Activated CD4-positive, alpha-beta T cell treated with anti-CD3 and anti-CD28 coated beads for 36 hours (primary cell): ENCODE measurements at regions of chr14 and their contacts with region 1.

Region 1: DNA sequence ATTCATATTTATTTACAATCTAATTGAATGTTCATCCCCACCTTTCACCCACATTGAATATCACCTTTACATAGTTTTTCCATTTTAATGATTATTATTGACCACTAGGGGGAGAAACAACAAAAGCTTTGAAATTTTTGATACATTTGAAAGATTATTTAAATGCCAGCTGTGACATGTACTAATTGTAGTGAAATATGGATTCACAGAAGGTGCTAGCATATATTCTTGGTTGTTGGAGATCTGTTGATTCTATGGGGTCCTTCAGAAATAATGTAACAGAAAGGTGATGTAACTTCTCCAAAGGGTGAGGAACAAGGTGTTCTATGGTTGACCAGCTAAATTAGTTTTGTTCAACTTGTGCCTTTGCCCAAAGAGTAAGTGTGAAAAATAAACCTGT is 22.4 kb upstream of the GPR33 start:
- DNase-seq: no peak
- ATAC-seq: no peak
- H3K4me3 Mint-ChIP-seq: no peak overlapping the region
- H3K27ac Mint-ChIP-seq: no peak overlapping the region
- H3K4me1 Mint-ChIP-seq: no peaks in the 10 kb centered on the region
- H3K27me3 Mint-ChIP-seq: no peaks in the 10 kb centered on the region

Region 2: DNA sequence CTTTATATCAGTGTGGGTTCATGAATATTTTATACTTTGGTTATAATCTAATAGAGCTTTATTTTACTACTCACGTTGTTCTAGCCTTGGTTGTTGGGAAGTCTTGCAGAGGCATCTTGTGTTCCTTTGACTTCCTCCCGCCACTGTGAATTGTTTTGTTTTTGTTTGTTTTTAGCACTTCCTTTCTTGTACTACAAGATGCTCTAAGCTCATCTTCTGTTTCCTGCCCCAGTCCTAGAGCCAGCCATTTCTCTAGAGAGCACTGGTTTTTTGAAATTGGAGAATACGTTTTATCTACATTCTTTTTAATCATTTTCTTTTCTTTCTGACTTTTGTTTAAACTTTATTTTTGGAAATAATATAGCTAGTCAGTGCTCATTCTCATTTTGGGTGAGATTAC is 35.1 kb after region 1 on chr14:
- CTCF ChIA-PET with region 1: no interaction called
- POLR2A ChIA-PET with region 1: no interaction called
- intact Hi-C with region 1: no loop called
- DNase-seq: no peak
- ATAC-seq: no peak
- H3K4me3 Mint-ChIP-seq: no peak overlapping the region
- H3K27ac Mint-ChIP-seq: no peak overlapping the region
- H3K4me1 Mint-ChIP-seq: no peaks in the 10 kb centered on the region
- H3K27me3 Mint-ChIP-seq: peaks cover 24% of the 10 kb centered on the region

Region 3: GRCh38 chr14:31770271-31770670 is 260.0 kb after region 1 on chr14:
- CTCF ChIA-PET with region 1: no interaction called
- POLR2A ChIA-PET with region 1: no interaction called
- intact Hi-C with region 1: no loop called
- DNase-seq: no peak
- ATAC-seq: no peak
- H3K4me3 Mint-ChIP-seq: no peak overlapping the region
- H3K27ac Mint-ChIP-seq: no peak overlapping the region
- H3K4me1 Mint-ChIP-seq: peaks cover 3% of the 10 kb centered on the region
- H3K27me3 Mint-ChIP-seq: no peaks in the 10 kb centered on the region

Region 4: DNA sequence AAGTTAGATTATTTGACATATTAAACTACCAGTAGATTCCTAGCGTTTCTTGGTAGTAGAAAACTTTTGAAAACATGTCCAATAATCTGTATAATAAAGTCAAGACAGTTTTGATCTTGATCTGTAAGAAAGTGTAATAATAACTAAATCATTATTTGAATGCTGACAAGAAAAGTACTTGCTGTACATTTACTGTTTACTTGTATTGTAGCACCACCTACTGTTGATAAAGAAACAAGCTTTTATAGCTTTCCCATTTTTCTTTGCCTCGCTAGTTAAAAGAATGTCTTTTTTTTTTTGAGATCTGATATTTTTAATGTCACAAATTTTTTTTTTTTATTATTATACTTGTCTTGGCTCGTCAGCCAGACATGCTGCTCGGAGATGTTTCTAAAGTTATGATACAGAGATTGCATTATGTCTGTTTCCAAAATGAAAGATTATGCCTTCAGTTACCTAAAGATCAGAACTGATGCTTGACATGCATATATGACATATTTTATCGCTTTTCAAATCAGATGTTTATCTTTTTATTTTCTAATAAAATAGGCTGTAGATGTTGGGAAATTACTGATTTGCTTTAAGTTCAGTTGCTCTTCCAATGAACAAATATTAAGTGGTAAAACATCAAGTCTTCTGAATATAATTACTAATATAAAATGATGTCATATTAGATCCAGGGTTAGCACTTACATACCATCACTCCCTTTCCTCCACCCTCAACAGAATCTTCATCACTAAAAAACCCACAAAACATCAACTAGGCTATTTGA is 959.4 kb after region 1 on chr14:
- CTCF ChIA-PET with region 1: no interaction called
- POLR2A ChIA-PET with region 1: no interaction called
- intact Hi-C with region 1: loop called in 1 of 2 experiments (anchors 5 kb)
- DNase-seq: no peak
- ATAC-seq: no peak
- H3K4me3 Mint-ChIP-seq: no peak overlapping the region
- H3K27ac Mint-ChIP-seq: no peak overlapping the region
- H3K4me1 Mint-ChIP-seq: no peaks in the 10 kb centered on the region
- H3K27me3 Mint-ChIP-seq: peaks cover 9% of the 10 kb centered on the region

Region 5: GRCh38 chr14:32560209-32560857 is 1050.1 kb after region 1 on chr14:
- CTCF ChIA-PET with region 1: no interaction called
- POLR2A ChIA-PET with region 1: no interaction called
- intact Hi-C with region 1: loop called in 1 of 2 experiments (anchors 2 kb)
- DNase-seq: peak; percentile 52
- ATAC-seq: no peak
- H3K4me3 Mint-ChIP-seq: no peak overlapping the region
- H3K27ac Mint-ChIP-seq: no peak overlapping the region
- H3K4me1 Mint-ChIP-seq: peaks cover 12% of the 10 kb centered on the region
- H3K27me3 Mint-ChIP-seq: no peaks in the 10 kb centered on the region